Caco-2 (cell line): ENCODE measurements at regions of chr1 and their contacts with region 1.

Region 1: GRCh38 chr1:70528590-70529333 is 117.7 kb downstream of the CTH start:
- DNase-seq: peak; percentile 23 to 33
- H3K4me3 ChIP-seq: no peak overlapping the region
- H3K4me3 Mint-ChIP-seq: no peak overlapping the region
- H3K27ac Mint-ChIP-seq: no peak overlapping the region
- H3K4me1 ChIP-seq: no peaks in the 10 kb centered on the region
- H3K4me1 Mint-ChIP-seq: no peaks in the 10 kb centered on the region
- H3K27me3 ChIP-seq: no peaks in the 10 kb centered on the region
- H3K27me3 Mint-ChIP-seq: peaks cover 10% of the 10 kb centered on the region
- CTCF ChIP-seq: peak; percentile 33 to 50

Region 2: GRCh38 chr1:70617728-70618127 is 89.0 kb after region 1 on chr1:
- CTCF ChIA-PET with region 1: interaction called, 4 read pairs
- POLR2A ChIA-PET with region 1: no interaction called
- intact Hi-C with region 1: loop called (anchors 1 kb)
- DNase-seq: no peak
- H3K4me3 ChIP-seq: no peak overlapping the region
- H3K4me3 Mint-ChIP-seq: no peak overlapping the region
- H3K27ac Mint-ChIP-seq: no peak overlapping the region
- H3K4me1 ChIP-seq: no peaks in the 10 kb centered on the region
- H3K4me1 Mint-ChIP-seq: no peaks in the 10 kb centered on the region
- H3K27me3 ChIP-seq: no peaks in the 10 kb centered on the region
- H3K27me3 Mint-ChIP-seq: peaks cover 7% of the 10 kb centered on the region
- CTCF ChIP-seq: no peak

Region 3: GRCh38 chr1:70896224-70896623 is 367.5 kb after region 1 on chr1:
- CTCF ChIA-PET with region 1: interaction called, 3 read pairs
- POLR2A ChIA-PET with region 1: no interaction called
- intact Hi-C with region 1: loop called (anchors 10 kb)
- DNase-seq: no peak
- H3K4me3 ChIP-seq: no peak overlapping the region
- H3K4me3 Mint-ChIP-seq: no peak overlapping the region
- H3K27ac Mint-ChIP-seq: no peak overlapping the region
- H3K4me1 ChIP-seq: no peaks in the 10 kb centered on the region
- H3K4me1 Mint-ChIP-seq: no peaks in the 10 kb centered on the region
- H3K27me3 ChIP-seq: no peaks in the 10 kb centered on the region
- H3K27me3 Mint-ChIP-seq: peaks cover 9% of the 10 kb centered on the region
- CTCF ChIP-seq: no peak